ENCODE measurements at regions of chr13 and their contacts with region 1.

Region 1: DNA sequence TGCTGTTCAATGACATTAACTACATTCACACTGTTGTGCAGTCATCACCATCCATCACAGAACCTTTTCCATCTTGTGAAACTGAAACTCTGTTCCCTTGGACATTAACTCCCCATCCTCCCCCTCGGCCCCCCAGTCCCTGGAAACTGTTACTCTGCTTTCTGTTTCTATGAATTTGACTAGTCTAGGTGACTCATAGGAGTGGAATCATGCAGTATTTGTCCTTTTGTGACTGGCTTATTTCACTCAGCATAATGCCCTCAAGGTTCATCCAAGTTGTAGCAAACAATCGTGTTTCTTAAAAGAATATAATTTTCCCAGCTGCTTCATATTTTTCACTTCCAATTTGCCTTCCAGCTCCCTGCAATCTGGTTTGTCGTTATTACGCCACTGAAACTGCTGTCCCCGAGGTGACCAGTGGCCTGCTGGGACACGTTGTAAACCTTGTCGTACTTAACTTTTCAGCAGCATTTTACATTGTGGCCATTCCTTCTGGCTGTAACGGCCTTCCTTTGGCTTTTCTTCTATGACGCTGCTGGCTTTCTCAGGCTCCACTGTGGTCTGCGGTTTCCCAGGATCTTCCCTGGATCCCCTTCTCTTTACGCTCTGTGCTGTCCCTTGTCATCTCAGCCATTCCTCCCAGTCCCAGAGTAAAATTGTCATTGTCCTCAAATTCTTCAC is 74.0 kb downstream of the DHRS12 start:
- DNase-seq: peak in 1 of 2 experiments; percentile 7
- H3K4me3 ChIP-seq: no peak overlapping the region
- H3K4me3 Mint-ChIP-seq: no peak overlapping the region
- H3K27ac Mint-ChIP-seq: no peak overlapping the region
- H3K4me1 ChIP-seq: peaks cover 12% of the 10 kb centered on the region; the same call in 1 of the 2 replicates
- H3K4me1 Mint-ChIP-seq: no peaks in the 10 kb centered on the region
- H3K27me3 ChIP-seq: no peaks in the 10 kb centered on the region
- H3K27me3 Mint-ChIP-seq: no peaks in the 10 kb centered on the region
- CTCF ChIP-seq: no peak

Region 2: DNA sequence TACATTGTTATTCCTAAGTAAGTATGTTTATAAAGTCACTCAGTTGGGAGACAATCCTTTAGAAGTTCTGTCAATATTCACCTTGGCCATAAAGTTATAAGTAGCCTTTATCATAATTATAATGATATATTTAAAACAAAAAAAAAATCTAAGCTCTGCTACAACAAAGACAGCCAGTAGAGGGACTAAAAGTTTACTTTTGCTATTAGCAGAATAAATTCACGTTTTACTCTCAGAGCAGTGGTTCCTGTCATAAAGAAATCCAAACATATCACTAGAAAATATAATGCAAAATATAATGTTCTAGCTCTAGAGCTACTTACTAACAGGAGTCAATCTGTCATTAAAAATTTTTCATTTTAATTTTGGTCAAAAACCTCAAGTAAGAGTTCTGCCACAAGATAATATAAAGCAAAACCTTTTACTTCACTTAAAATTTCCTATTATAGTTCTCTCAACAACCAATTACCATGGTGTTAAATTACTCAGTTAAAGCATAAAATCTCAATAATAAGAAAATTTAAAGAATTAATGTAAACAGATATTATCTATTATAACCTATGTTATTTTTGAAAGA is 294.9 kb before region 1 on chr13:
- CTCF ChIA-PET with region 1: interaction called, 6 read pairs
- POLR2A ChIA-PET with region 1: no interaction called
- intact Hi-C with region 1: loop called (anchors 1 kb)
- DNase-seq: no peak
- H3K4me3 ChIP-seq: no peak overlapping the region
- H3K4me3 Mint-ChIP-seq: no peak overlapping the region
- H3K27ac Mint-ChIP-seq: no peak overlapping the region
- H3K4me1 ChIP-seq: peaks cover 3% of the 10 kb centered on the region; the same call in 1 of the 2 replicates
- H3K4me1 Mint-ChIP-seq: no peaks in the 10 kb centered on the region
- H3K27me3 ChIP-seq: no peaks in the 10 kb centered on the region
- H3K27me3 Mint-ChIP-seq: no peaks in the 10 kb centered on the region
- CTCF ChIP-seq: peak; percentile 55

Region 3: DNA sequence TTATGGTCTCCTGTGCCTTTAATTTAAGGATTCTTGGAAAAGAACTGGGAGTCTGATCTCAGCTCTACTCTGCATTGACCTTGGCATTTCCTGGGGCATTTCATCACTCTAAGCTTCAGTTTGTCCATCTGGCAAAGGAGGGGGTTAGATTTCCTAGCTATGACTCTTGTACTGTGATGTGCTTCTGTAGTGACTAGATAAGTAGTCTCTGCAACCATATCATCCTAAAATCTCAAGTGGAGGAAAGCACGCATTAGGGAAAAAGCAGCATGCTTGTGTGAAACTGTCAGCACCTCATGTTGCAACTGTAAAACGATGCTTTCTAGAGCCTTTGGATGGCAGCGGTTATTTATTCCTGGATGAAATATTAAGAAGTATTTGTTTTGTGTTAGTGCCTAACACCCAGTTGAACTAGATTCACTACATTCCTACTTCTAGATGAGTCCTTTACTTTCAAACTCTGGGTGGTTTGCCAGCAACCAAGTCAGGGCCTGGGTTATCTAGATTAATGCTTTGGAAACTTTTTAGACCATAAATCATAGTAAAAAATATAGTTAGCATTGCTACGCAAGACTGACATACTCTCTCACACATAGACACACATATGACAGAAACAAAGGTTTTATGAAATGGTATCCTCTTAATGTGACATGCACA is 138.9 kb before region 1 on chr13:
- CTCF ChIA-PET with region 1: no interaction called
- POLR2A ChIA-PET with region 1: no interaction called
- intact Hi-C with region 1: loop called (anchors 2 kb)
- DNase-seq: peak in 1 of 2 experiments; percentile 20
- H3K4me3 ChIP-seq: no peak overlapping the region
- H3K4me3 Mint-ChIP-seq: no peak overlapping the region
- H3K27ac Mint-ChIP-seq: no peak overlapping the region
- H3K4me1 ChIP-seq: peaks cover 10% of the 10 kb centered on the region
- H3K4me1 Mint-ChIP-seq: peaks cover under 1% of the 10 kb centered on the region
- H3K27me3 ChIP-seq: no peaks in the 10 kb centered on the region
- H3K27me3 Mint-ChIP-seq: no peaks in the 10 kb centered on the region
- CTCF ChIP-seq: no peak

Region 4: DNA sequence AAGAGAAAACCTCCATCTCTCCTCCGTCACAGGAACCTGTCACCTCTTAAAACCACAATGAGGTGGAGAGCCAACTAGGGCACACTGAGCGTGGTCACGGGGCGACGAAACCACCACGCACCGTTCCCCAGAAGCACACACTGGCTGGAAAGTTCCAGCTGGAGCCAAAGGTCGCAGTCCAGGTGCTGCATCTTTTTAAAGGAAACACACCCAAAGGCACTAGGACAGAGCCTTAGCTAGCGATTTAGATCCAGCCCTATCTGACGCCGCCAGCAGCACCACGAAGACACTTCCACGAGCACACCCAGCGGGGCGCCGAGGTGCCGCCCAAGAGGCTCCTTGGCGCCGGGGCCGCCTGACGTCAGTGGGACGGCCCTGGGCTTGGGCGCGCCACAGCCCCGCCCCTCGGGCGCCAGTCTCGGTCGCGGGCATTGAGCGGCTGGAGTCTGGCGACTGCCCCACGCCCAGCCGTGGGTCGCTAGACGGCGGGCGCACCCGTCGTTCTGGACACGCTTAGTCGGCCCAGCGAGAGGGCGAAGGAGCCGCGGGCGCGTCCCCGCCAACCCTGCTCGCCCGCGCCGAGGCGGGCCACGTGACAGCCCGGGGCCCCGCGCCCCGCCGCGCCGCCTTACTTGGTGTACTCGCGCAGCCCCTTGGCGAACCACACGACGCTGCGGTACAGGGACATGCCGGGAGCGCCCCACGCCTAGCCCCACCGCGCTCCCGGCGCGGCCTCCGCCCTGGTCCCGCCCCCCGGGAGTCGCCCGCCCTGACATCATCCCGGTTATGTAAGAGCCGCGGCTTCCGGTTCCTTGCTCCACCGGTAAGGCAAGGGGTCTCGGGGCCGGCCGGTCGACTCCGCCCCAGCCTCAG is 73.7 kb after region 1 on chr13 and contains the start of gene DHRS12:
- CTCF ChIA-PET with region 1: no interaction called
- POLR2A ChIA-PET with region 1: no interaction called
- intact Hi-C with region 1: loop called (anchors 5 kb)
- DNase-seq: peak; percentile 92 to 94
- H3K4me3 ChIP-seq: peak within 1 kb of the TSS; percentile 69
- H3K4me3 Mint-ChIP-seq: peak within 1 kb of the TSS; percentile 89
- H3K27ac Mint-ChIP-seq: peak within 1 kb of the TSS; percentile 94
- H3K4me1 ChIP-seq: peaks cover 8% of the 10 kb centered on the region; the same call in 1 of the 2 replicates
- H3K4me1 Mint-ChIP-seq: peaks cover 9% of the 10 kb centered on the region
- H3K27me3 ChIP-seq: no peaks in the 10 kb centered on the region
- H3K27me3 Mint-ChIP-seq: no peaks in the 10 kb centered on the region
- CTCF ChIP-seq: no peak
- total RNA-seq, gene DHRS12: 12.5 and 14.1 TPM in 2 replicates

Region 5: GRCh38 chr13:51945149-51945548 is 215.1 kb after region 1 on chr13:
- CTCF ChIA-PET with region 1: no interaction called
- POLR2A ChIA-PET with region 1: no interaction called
- intact Hi-C with region 1: no loop called
- DNase-seq: peak in 1 of 2 experiments; percentile 11
- H3K4me3 ChIP-seq: no peak overlapping the region
- H3K4me3 Mint-ChIP-seq: no peak overlapping the region
- H3K27ac Mint-ChIP-seq: no peak overlapping the region
- H3K4me1 ChIP-seq: no peaks in the 10 kb centered on the region
- H3K4me1 Mint-ChIP-seq: no peaks in the 10 kb centered on the region
- H3K27me3 ChIP-seq: no peaks in the 10 kb centered on the region
- H3K27me3 Mint-ChIP-seq: no peaks in the 10 kb centered on the region
- CTCF ChIP-seq: no peak